A549 (cell line): ENCODE measurements at regions of chr6 and their contacts with region 1.

Region 1: DNA sequence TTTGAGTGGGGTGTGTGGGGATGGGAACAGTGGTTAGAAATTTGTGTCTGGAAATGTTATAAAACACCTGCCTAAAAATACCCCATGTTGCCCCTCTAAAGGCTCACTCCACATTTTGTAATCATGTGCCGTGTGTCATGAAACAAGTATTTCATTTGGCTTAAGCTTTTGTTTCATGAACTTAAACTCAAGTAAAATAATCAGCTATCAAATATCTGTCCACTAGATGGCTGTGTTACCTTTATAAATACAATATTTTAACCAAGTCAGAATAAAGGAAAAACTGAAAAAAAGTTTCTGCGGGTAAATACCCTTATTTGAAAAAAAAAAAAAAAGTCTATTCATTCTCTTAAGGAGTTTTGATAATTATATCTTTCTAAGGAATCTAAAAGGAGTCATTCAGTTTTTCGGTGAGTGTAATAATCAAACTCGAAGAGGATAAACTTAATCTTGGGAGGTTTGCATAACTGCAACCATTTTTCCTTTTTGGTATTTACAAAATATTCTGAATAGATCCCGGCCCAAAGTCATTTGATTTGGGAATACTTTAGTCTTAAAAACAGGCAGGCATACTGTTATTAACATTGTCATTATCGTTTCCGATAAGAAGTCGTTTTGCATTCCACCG is 29.9 kb upstream of the MTRF1L start:
- DNase-seq: peak in 1 of 2 experiments; percentile 46
- ATAC-seq: peak; percentile 57 to 66; a peak in 4 of 6 replicates
- H3K4me3 ChIP-seq: no peak overlapping the region
- H3K27ac ChIP-seq: peak overlapping the region; percentile 36 to 38; a peak in 3 of 6 replicates
- H3K4me1 ChIP-seq: peaks cover 41% of the 10 kb centered on the region
- CTCF ChIP-seq: peak; percentile 59
- EP300 ChIP-seq: no peak
- POLR2A ChIP-seq: no peak
- RAD21 ChIP-seq: peak; percentile 64 to 82

Region 2: DNA sequence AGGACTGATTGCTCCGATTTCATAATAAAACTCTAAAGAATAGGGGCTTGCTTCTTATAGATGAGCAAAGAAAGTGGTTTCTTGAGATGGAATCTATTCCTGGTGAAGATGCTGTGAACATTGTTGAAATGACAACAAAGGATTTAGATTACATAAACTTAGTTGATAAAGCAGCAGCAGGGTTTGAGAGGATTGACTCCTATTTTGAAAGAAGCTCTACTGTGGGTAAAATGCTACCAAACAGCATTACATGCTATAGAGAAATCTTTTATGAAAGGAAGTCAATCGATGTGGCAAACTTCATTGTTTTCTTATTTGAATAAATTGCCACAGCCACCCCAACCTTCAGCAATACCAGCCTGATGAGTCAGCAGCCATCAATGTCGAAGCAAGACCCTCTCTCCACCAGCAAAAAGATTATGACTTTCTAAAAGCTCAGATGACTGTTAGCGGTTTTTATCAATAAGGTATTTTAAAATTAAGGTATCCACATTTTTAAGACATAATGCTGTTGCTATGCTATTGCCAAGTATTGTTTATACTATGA is 17.2 kb before region 1 on chr6:
- CTCF ChIA-PET with region 1: no interaction called
- POLR2A ChIA-PET with region 1: no interaction called
- DNase-seq: no peak
- ATAC-seq: no peak
- H3K4me3 ChIP-seq: no peak overlapping the region
- H3K27ac ChIP-seq: no peak overlapping the region
- H3K4me1 ChIP-seq: no peaks in the 10 kb centered on the region
- CTCF ChIP-seq: no peak
- EP300 ChIP-seq: no peak
- POLR2A ChIP-seq: no peak
- RAD21 ChIP-seq: no peak

Region 3: DNA sequence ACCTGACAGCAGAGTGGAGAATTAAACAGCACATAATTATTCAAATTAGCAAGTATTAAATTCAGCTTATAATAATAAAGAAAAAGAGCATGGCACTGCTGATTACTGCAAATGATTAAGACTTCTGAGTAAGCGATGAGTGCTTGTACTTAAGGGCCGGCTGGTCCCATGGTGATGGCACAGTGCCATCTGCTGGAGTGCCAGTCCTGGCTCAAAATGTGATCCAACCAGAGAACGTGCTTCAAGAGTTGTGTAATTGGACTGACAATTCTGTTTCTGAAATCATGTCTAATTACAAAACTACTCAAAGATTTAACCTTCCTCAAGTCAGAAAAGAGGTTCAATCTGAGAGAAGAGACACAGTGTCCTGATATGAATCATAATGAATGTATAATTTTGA is 280.3 kb after region 1 on chr6:
- CTCF ChIA-PET with region 1: interaction called, 20 read pairs
- POLR2A ChIA-PET with region 1: no interaction called
- DNase-seq: peak; percentile 14 to 70
- ATAC-seq: peak; percentile 83 to 87
- H3K4me3 ChIP-seq: no peak overlapping the region
- H3K27ac ChIP-seq: no peak overlapping the region
- H3K4me1 ChIP-seq: no peaks in the 10 kb centered on the region
- CTCF ChIP-seq: peak; percentile 70
- EP300 ChIP-seq: no peak
- POLR2A ChIP-seq: no peak
- RAD21 ChIP-seq: peak; percentile 90